ENCODE measurements at regions of chr2 and their contacts with region 1.

Region 1: DNA sequence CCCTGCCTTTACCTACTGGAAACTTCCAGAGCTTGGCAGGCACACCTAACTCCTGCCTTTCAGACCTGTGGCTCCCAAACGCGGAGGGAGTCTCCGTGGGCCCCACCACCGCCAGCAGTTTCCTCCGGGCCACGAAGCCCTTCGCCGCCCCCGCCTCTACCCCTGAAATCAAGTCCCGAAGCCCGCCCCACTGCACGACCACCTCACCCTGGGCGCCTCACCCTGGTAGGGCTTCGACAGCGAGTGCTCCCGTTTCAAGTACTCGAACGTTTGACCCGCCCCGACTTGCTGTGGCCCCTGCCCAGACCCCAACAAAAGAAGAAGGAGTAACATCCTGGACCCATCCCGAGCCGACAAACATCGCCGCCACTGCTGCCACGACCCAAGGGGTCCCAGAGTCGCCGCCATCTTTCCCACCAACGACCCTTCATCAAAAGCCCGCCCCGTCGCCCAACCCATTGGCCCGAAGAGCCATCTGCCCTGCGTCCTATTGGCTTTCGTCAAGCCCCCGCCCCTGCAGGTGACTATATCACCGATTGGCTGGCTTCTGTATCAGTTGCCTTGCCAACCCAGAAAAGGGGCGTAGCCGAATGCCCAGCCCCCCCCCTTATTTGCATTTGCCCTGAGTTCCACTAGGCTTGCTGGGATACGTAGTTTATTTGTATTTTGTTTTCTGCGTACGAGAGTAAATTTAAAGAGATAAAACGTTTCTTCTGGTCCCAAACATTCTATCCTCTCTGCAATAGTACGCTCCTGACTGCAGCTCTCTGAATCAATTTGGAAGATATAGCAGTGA is at the start of gene LMAN2L:
- DNase-seq: peak; percentile 95
- ATAC-seq: peak; percentile 100
- H3K4me3 ChIP-seq: peak within 1 kb of the TSS; percentile 81
- H3K27ac ChIP-seq: peak within 1 kb of the TSS; percentile 75
- H3K4me1 ChIP-seq: peaks cover 2% of the 10 kb centered on the region
- H3K27me3 ChIP-seq: no peaks in the 10 kb centered on the region; the same call in 1 of the 2 replicates
- CTCF ChIP-seq: no peak
- POLR2A ChIP-seq: peak; percentile 70; the same call in 1 of the 2 replicates
- RAD21 ChIP-seq: no peak
- total RNA-seq, gene LMAN2L: 19.2 and 22.9 TPM in 2 replicates

Region 2: GRCh38 chr2:96638144-96639121 is 101.4 kb before region 1 on chr2 and contains the start of gene KANSL3:
- CTCF ChIA-PET with region 1: no interaction called
- POLR2A ChIA-PET with region 1: no interaction called
- dilution Hi-C with region 1: no loop called
- in situ Hi-C with region 1: no loop called
- intact Hi-C with region 1: loop called (anchors 5 kb)
- DNase-seq: peak; percentile 93
- ATAC-seq: peak; percentile 93
- H3K4me3 ChIP-seq: peak within 1 kb of the TSS; percentile 87
- H3K27ac ChIP-seq: peak within 1 kb of the TSS; percentile 84
- H3K4me1 ChIP-seq: peaks cover 13% of the 10 kb centered on the region
- H3K27me3 ChIP-seq: no peaks in the 10 kb centered on the region
- CTCF ChIP-seq: no peak
- POLR2A ChIP-seq: peak; percentile 95
- RAD21 ChIP-seq: peak; percentile 29
- total RNA-seq, gene KANSL3: 25.0 and 26.3 TPM in 2 replicates

Region 3: DNA sequence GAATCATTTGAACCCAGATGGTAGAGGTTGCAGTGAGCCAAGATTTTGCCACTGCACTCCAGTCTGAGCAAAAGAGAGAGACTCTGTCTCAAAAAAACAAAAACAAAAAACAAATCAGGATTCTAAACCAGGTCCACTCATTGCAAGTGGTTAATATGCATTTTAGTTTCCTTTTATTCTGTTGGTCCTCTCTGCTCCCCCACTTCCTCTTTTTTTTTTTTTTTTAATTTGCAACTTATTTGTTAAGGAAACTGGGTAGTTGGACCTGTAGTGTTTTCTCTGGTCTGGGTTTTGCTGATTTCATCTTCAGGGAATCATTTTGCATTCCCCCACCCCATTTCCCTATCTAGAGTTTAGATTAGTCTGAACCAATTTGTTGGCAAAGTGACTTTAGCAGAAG is 83.3 kb before region 1 on chr2:
- CTCF ChIA-PET with region 1: no interaction called
- POLR2A ChIA-PET with region 1: no interaction called
- dilution Hi-C with region 1: no loop called
- in situ Hi-C with region 1: no loop called
- intact Hi-C with region 1: no loop called
- DNase-seq: no peak
- ATAC-seq: no peak
- H3K4me3 ChIP-seq: no peak overlapping the region
- H3K27ac ChIP-seq: no peak overlapping the region
- H3K4me1 ChIP-seq: no peaks in the 10 kb centered on the region
- H3K27me3 ChIP-seq: no peaks in the 10 kb centered on the region
- CTCF ChIP-seq: no peak
- POLR2A ChIP-seq: no peak
- RAD21 ChIP-seq: no peak

Region 4: GRCh38 chr2:98086491-98087446 is 1346.9 kb after region 1 on chr2 and contains the start of gene VWA3B:
- CTCF ChIA-PET with region 1: no interaction called
- POLR2A ChIA-PET with region 1: interaction called, 11 read pairs
- dilution Hi-C with region 1: no loop called
- in situ Hi-C with region 1: no loop called
- intact Hi-C with region 1: no loop called
- DNase-seq: no peak
- ATAC-seq: peak; percentile 96
- H3K4me3 ChIP-seq: peak within 1 kb of the TSS; percentile 46
- H3K27ac ChIP-seq: no peak within 1 kb of the TSS
- H3K4me1 ChIP-seq: no peaks in the 10 kb centered on the region
- H3K27me3 ChIP-seq: peaks cover 39% of the 10 kb centered on the region
- CTCF ChIP-seq: no peak
- POLR2A ChIP-seq: no peak
- RAD21 ChIP-seq: no peak
- total RNA-seq, gene VWA3B: not detected in 2 replicates

Measured in IMR-90 (cell line).